Activated T-helper 1 cell treated with anti-CD3 and anti-CD28 coated beads, Interleukin-12 subunit alpha, Interleukin-12 subunit beta, Interleukin-2, Interleukin-4 antibody, amounts not matched to agents 30 ng/mL and 10 ng/mL and 1 ng/mL, durations not matched to agents 14 hours and 24 hours and 36 hours (primary cell): ENCODE measurements at regions of chr10 and their contacts with region 1.

Region 1: GRCh38 chr10:88990384-88991160 is at the start of gene FAS:
- DNase-seq: peak; percentile 81
- H3K4me3 Mint-ChIP-seq: peak within 1 kb of the TSS; percentile 97
- H3K27ac Mint-ChIP-seq: peak within 1 kb of the TSS; percentile 97
- H3K4me1 Mint-ChIP-seq: peaks cover 75% of the 10 kb centered on the region
- H3K27me3 Mint-ChIP-seq: no peaks in the 10 kb centered on the region
- total RNA-seq, gene FAS: 36.4 and 38.6 TPM in 2 replicates

Region 2: DNA sequence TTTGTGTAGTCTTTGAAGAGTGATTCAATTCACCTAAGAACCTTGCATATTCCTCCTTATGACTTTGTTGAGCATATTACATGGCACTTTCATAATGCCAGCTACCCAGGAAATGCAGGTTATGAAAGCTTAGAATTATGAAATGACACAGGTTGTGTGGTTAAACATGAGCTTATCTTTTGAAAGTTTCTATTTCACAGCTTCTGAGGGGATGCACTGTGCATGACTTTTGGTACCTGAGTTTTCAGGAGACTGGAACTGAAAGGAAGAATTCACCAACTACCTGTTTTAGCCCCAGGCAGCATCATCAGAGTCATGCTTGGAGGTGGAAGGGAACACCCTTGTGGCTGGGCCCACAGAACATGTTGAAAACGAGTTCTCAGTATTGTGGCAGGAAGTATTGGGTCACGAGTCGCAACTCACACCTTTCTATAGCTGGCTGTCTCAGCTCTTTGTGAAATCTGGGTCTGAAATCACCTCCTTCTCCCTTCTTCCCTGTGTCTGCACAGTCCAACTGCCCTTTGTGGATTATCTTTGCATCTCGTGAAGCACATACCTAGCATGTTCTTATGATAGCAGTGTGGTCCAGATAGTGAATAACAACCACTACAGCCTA is 899.0 kb before region 1 on chr10:
- intact Hi-C with region 1: loop called (anchors 2 kb)
- DNase-seq: peak; percentile 76
- H3K4me3 Mint-ChIP-seq: peak overlapping the region; percentile 13
- H3K27ac Mint-ChIP-seq: peak overlapping the region; percentile 68
- H3K4me1 Mint-ChIP-seq: peaks cover 35% of the 10 kb centered on the region
- H3K27me3 Mint-ChIP-seq: peaks cover 29% of the 10 kb centered on the region

Region 3: GRCh38 chr10:88598055-88598454 is 392.5 kb before region 1 on chr10:
- intact Hi-C with region 1: no loop called
- DNase-seq: no peak
- H3K4me3 Mint-ChIP-seq: no peak overlapping the region
- H3K27ac Mint-ChIP-seq: no peak overlapping the region
- H3K4me1 Mint-ChIP-seq: peaks cover 9% of the 10 kb centered on the region
- H3K27me3 Mint-ChIP-seq: peaks cover 4% of the 10 kb centered on the region

Region 4: DNA sequence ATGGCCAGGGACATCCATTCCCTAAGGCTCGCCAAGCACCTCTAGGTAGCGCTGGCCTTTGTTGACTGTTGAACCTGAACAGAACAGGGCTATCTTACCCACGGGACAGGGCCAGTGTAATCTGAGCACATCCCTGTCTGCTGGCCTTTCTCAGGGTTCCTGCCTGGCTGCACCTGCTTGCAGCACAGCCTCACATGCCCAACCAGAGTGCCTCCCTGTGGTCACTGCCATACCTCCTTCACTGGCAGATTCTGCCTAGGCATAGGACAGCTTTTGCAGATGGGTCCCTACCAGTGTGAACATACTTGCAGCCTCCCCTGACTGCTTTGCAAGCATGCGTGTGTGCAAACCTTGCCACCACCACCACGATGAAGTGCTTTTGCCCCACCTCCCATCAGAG is 246.6 kb before region 1 on chr10:
- intact Hi-C with region 1: no loop called
- DNase-seq: no peak
- H3K4me3 Mint-ChIP-seq: no peak overlapping the region
- H3K27ac Mint-ChIP-seq: no peak overlapping the region
- H3K4me1 Mint-ChIP-seq: no peaks in the 10 kb centered on the region
- H3K27me3 Mint-ChIP-seq: peaks cover 20% of the 10 kb centered on the region

Region 5: GRCh38 chr10:88880282-88881076 is 110.1 kb before region 1 on chr10:
- intact Hi-C with region 1: loop called (anchors 1 kb)
- DNase-seq: peak; percentile 68
- H3K4me3 Mint-ChIP-seq: peak overlapping the region; percentile 98
- H3K27ac Mint-ChIP-seq: peak overlapping the region; percentile 99
- H3K4me1 Mint-ChIP-seq: peaks cover 74% of the 10 kb centered on the region
- H3K27me3 Mint-ChIP-seq: no peaks in the 10 kb centered on the region

Region 6: DNA sequence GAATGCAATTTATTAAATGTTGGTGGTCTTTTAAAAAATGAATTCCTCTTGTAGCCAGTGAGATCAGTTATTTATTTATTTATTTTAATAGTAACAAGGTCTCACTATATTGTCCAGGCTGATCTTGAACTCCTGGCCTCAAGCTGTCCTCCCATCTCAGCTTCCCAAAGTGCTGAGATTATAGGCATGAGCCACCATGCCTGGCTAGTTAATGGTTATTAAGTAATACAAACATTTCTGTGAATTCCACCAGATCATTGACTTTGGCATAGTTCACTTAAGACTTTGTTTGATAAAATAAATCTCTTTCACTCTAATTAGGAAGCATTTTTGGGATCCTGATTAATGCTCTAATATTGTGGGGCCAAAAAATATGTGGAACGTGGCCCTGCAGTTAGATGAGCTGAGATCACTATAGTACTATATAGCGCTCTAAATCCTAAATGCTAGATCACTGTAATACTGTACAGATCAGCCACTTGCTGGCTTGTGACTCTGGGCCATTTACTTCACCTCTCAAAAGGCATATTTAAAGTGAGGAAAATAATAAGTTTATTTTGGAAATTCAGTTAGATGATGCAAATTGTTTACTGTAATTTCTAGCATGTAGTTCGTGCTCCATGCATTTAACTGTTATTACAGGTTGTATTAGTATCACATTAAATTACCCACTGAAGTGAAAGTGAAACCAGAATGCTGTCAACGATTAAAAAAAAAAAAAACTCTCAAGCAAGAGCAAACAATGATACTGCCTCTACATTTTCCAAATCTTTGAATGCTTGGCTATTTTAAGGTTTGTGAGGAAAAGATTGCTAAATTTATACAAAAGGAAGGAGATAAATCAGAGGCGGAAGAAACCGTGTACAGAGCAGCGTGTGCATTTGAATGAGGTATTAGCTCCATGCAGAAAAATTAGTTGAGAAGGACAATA is 15.9 kb before region 1 on chr10:
- intact Hi-C with region 1: loop called (anchors 1 kb)
- DNase-seq: no peak
- H3K4me3 Mint-ChIP-seq: peak overlapping the region; percentile 86
- H3K27ac Mint-ChIP-seq: peak overlapping the region; percentile 83
- H3K4me1 Mint-ChIP-seq: peaks cover 16% of the 10 kb centered on the region
- H3K27me3 Mint-ChIP-seq: peaks cover 3% of the 10 kb centered on the region

Region 7: GRCh38 chr10:89042562-89042961 is 52.0 kb after region 1 on chr10:
- intact Hi-C with region 1: no loop called
- DNase-seq: no peak
- H3K4me3 Mint-ChIP-seq: no peak overlapping the region
- H3K27ac Mint-ChIP-seq: no peak overlapping the region
- H3K4me1 Mint-ChIP-seq: no peaks in the 10 kb centered on the region
- H3K27me3 Mint-ChIP-seq: no peaks in the 10 kb centered on the region

Region 8: GRCh38 chr10:89086801-89087521 is 96.4 kb after region 1 on chr10:
- intact Hi-C with region 1: loop called (anchors 1 kb)
- DNase-seq: no peak
- H3K4me3 Mint-ChIP-seq: no peak overlapping the region
- H3K27ac Mint-ChIP-seq: no peak overlapping the region
- H3K4me1 Mint-ChIP-seq: peaks cover 9% of the 10 kb centered on the region
- H3K27me3 Mint-ChIP-seq: peaks cover 15% of the 10 kb centered on the region

Region 9: GRCh38 chr10:89097226-89097625 is 106.7 kb after region 1 on chr10:
- intact Hi-C with region 1: no loop called
- DNase-seq: no peak
- H3K4me3 Mint-ChIP-seq: no peak overlapping the region
- H3K27ac Mint-ChIP-seq: no peak overlapping the region
- H3K4me1 Mint-ChIP-seq: peaks cover 9% of the 10 kb centered on the region
- H3K27me3 Mint-ChIP-seq: peaks cover 8% of the 10 kb centered on the region

Region 10: DNA sequence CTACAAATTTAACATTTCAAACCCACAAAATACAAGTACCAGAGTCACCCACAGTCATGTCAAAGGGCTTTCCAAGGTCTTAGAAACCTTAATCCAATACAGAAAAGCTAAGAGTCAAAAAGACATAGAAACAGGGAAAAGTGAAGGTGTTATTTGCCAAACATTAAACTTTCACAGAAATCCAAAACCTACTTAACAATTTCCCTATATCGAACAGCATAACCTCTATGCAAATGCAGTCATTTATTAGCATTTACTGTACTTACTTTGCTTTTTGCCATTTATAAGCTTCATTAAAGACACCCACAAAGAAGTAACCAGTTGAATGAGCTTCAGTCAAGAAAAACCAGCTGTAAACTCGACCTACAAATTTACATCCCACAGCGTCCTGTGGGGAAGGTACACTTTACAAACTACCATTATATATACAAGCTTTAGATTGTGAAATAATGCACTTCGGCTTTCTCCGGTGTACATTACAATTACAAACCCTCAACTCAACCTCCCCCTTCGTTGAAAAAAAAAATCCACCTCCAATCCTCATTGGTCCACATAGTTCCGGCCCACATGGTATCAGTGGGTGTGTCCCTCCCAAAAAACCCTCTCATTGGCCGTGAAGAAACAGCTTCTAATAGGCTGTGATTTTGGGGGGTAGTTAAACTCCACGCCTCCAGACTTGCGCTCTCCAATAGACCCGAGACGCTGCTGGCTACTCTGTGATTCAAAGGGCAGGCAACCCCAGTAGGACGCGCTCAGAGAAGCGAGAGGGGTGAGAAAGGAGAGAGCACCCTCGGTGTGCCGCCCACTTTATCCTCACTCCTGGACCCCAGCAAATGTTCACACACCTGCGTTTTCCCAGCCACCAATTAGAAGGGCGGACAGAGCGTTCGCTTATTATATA is 653.1 kb after region 1 on chr10:
- intact Hi-C with region 1: loop called (anchors 10 kb)
- DNase-seq: peak; percentile 68
- H3K4me3 Mint-ChIP-seq: no peak overlapping the region
- H3K27ac Mint-ChIP-seq: no peak overlapping the region
- H3K4me1 Mint-ChIP-seq: peaks cover 7% of the 10 kb centered on the region
- H3K27me3 Mint-ChIP-seq: peaks cover 14% of the 10 kb centered on the region